ENCODE measurements at regions of chr11 and their contacts with region 1.

Region 1: GRCh38 chr11:28058333-28058732 is 49.6 kb downstream of the KIF18A start:
- DNase-seq: no peak
- CTCF ChIP-seq: no peak

Region 2: GRCh38 chr11:28347371-28347770 is 289.0 kb after region 1 on chr11:
- CTCF ChIA-PET with region 1: no interaction called
- POLR2A ChIA-PET with region 1: interaction called, 10 read pairs
- DNase-seq: no peak
- CTCF ChIP-seq: no peak